ENCODE measurements at regions of chr11 and their contacts with region 1.

Region 1: DNA sequence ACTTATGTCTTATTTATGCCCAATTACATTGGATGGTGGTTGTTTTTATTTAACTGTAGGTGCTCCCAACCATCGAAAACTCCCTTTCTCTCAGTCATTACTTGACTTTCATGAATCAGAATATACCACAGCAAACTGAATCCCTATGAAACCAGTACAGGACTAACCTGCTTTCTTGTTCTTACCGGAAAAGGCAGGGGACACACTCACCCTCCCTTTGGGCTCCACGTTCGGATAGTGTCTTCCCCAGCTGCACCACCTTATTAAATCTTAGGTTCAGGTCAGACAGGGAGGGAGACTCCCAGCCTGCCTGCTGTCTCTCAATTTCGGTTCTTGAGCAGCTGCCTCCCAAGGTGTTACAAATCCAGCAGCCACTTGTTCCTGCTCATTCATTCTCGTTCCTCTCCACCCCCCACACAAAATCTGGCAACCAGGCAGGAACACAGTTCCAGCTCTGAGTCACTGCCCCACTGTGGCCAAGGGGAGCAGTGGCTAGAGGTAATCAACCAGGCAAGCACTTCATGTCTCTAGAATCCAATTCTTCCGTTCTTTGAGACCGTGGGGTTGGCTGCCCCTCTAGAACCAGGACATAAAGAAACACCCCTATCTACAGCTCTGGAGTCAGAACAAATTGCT is 133.0 kb downstream of the PLEKHA7 start:
- DNase-seq: peak; percentile 65
- ATAC-seq: peak; percentile 84

Region 2: GRCh38 chr11:16703795-16704194 is 177.4 kb before region 1 on chr11:
- intact Hi-C with region 1: no loop called
- DNase-seq: no peak
- ATAC-seq: no peak

Region 3: DNA sequence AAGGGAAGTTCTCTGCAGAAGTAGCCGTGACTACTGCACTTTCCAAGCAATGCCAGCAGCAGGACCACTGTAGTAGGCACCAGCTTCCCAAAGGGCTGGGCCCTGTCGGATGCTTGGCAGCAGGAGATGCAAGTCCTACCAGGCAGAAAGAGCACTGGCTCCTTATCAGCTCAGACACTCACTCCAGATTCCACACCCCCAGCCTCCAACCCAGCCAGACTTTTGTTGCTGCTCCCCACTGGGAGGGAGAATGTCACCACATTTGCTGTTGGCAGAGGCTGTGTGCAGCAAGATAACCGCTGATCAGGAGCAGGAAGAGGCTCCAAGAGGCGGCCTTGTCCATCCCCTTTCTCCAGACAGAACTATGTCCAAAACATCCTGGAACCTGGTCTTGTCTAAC is 24.0 kb before region 1 on chr11:
- intact Hi-C with region 1: loop called (anchors 2 kb)
- DNase-seq: no peak
- ATAC-seq: peak; percentile 85